ENCODE measurements at regions of chr5 and their contacts with region 1.

Region 1: GRCh38 chr5:112737463-112738190 is at the start of gene APC:
- DNase-seq: peak; percentile 93 to 94
- ATAC-seq: peak; percentile 99 to 100 (median 100)
- H3K4me3 ChIP-seq: peak within 1 kb of the TSS; percentile 47 to 75 (median 70)
- H3K27ac ChIP-seq: peak within 1 kb of the TSS; percentile 6 to 85 (median 74)
- H3K4me1 ChIP-seq: peaks cover 0 to 42% (median 32%) of the 10 kb centered on the region in 9 donors
- H3K27me3 ChIP-seq: no peaks in the 10 kb centered on the region
- CTCF ChIP-seq: peak in 4 of 9 donors; percentile 3 to 19 (median 12)
- total RNA-seq, gene APC: 28.5 to 47.6 (median 38.4) TPM

Region 2: DNA sequence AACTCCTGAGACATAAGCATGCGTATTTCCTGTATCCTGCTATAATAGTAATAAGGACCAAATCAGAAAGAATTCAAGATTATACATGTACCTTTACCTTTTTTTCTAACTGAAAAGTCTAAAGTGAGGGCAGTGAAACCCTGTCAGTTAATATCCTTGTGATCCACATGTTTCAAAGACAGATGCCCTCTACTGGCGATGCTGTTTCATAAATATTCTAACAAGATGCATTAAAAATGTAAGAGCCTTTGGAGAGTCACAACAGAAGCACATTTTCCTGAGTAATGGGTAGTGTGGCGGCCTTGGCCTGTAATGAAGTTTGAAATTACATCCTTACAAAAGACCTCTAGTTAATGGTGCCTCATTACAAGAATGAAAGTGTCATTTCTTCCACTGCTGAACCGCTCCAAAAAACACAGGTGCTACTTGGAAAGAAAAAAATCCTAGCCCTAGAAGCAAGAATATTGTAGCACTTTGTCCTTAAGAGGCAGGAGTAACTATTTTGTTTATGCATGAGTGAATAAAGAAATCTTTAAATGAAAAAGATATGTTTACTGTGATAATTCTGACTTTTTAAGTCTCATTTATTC is 551.1 kb before region 1 on chr5:
- intact Hi-C with region 1: loop called in 1 of 10 experiments (anchors 10 kb)
- DNase-seq: no peak
- ATAC-seq: peak in 1 of 8 donors; percentile 56
- H3K4me3 ChIP-seq: no peak overlapping the region
- H3K27ac ChIP-seq: no peak overlapping the region
- H3K4me1 ChIP-seq: no peaks in the 10 kb centered on the region
- H3K27me3 ChIP-seq: no peaks in the 10 kb centered on the region
- CTCF ChIP-seq: peak; percentile 16 to 66 (median 55)

Region 3: GRCh38 chr5:112707187-112708102 is 30.2 kb before region 1 on chr5:
- intact Hi-C with region 1: loop called in 3 of 10 experiments (anchors 1 to 5 kb)
- DNase-seq: peak; percentile 97 to 99
- ATAC-seq: peak; percentile 96 to 99 (median 98)
- H3K4me3 ChIP-seq: peak overlapping the region; percentile 81 to 97 (median 90)
- H3K27ac ChIP-seq: peak overlapping the region; percentile 91 to 96 (median 94)
- H3K4me1 ChIP-seq: peaks cover 4 to 63% (median 39%) of the 10 kb centered on the region in 9 donors
- H3K27me3 ChIP-seq: no peaks in the 10 kb centered on the region
- CTCF ChIP-seq: peak in 4 of 9 donors; percentile 9 to 29 (median 18)

Measured in heart right ventricle (tissue), 16 donors.